Panc1 (cell line): ENCODE measurements at regions of chr12 and their contacts with region 1.

Region 1: GRCh38 chr12:119902084-119902509 is 25.0 kb upstream of the CIT start:
- DNase-seq: peak; percentile 66
- ATAC-seq: peak; percentile 91
- H3K4me3 ChIP-seq: no peak overlapping the region
- H3K27ac ChIP-seq: no peak overlapping the region
- H3K4me1 ChIP-seq: no peaks in the 10 kb centered on the region
- H3K27me3 ChIP-seq: no peaks in the 10 kb centered on the region
- CTCF ChIP-seq: peak; percentile 94

Region 2: DNA sequence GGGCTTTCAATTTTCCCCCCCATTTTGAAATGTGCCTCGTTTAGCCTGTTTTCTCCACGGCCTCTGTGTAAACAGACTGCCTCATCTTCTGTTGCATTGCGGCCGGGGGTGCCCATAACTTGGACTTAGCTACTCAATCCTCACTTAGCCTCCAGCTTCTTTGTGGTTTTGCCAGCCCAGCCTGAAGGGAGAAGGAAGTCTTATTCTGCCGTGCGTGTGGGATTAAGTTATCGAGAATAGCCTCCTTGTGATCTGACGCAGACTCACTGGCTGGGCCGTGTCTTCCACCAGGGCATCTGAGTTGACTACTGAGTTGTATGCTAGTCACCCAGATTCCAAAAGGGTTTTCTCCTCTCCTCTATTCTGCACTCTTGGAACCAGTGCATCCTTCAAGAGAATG is 226.1 kb before region 1 on chr12:
- CTCF ChIA-PET with region 1: interaction called, 10 read pairs
- POLR2A ChIA-PET with region 1: no interaction called
- in situ Hi-C with region 1: no loop called
- intact Hi-C with region 1: no loop called
- DNase-seq: no peak
- ATAC-seq: no peak
- H3K4me3 ChIP-seq: no peak overlapping the region
- H3K27ac ChIP-seq: no peak overlapping the region
- H3K4me1 ChIP-seq: peaks cover 9% of the 10 kb centered on the region
- H3K27me3 ChIP-seq: no peaks in the 10 kb centered on the region
- CTCF ChIP-seq: no peak